Posterior cingulate gyrus (tissue), 11 donors: ENCODE measurements at regions of chr10 and their contacts with region 1.

Region 1: GRCh38 chr10:107814865-107815487 is 650.5 kb upstream of the SORCS1 start:
- DNase-seq: peak in 7 of 10 donors; percentile 17 to 78 (median 34)

Region 2: DNA sequence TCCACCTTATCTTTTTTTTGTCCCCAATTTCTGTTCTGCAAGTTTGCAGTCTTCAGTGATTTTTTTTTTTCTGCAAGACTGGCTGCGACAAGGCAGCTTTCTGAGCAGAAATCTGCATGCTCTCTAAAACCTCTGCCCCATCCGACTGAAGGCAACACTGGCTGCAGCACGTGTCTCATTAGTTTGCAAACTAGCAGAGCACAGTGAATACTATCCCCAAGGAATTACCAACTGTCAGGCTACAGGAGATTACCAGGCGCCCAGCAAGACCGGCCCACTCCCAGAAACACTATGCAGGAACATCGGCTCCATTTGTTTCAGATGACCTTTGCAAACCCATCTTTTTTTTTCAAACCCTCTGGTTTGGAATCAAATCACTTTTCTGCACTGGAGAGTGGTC is 1189.2 kb before region 1 on chr10:
- intact Hi-C with region 1: loop called (anchors 10 kb)
- DNase-seq: no peak

Region 3: GRCh38 chr10:106705681-106706100 is 1109.3 kb before region 1 on chr10:
- intact Hi-C with region 1: loop called (anchors 5 kb)
- DNase-seq: peak in 9 of 10 donors; percentile 44 to 92 (median 75)

Region 4: GRCh38 chr10:107409522-107409921 is 405.5 kb before region 1 on chr10:
- intact Hi-C with region 1: loop called (anchors 5 kb)
- DNase-seq: no peak

Region 5: GRCh38 chr10:107873007-107873406 is 58.0 kb after region 1 on chr10:
- intact Hi-C with region 1: no loop called
- DNase-seq: no peak